ENCODE measurements at regions of chr21 and their contacts with region 1.

Region 1: GRCh38 chr21:38380481-38381137 is 117.7 kb downstream of the ERG start:
- DNase-seq: peak in 1 of 2 donors; percentile 56
- ATAC-seq: no peak
- H3K4me3 ChIP-seq: no peak overlapping the region
- H3K27ac ChIP-seq: peak overlapping the region; percentile 85 to 94
- H3K4me1 ChIP-seq: peaks cover 0 to 3% of the 10 kb centered on the region in 2 donors
- H3K27me3 ChIP-seq: no peaks in the 10 kb centered on the region

Region 2: GRCh38 chr21:38333301-38334272 is 47.0 kb before region 1 on chr21:
- intact Hi-C with region 1: no loop called
- DNase-seq: no peak
- ATAC-seq: peak; percentile 52
- H3K4me3 ChIP-seq: no peak overlapping the region
- H3K27ac ChIP-seq: no peak overlapping the region
- H3K4me1 ChIP-seq: no peaks in the 10 kb centered on the region
- H3K27me3 ChIP-seq: no peaks in the 10 kb centered on the region

Region 3: DNA sequence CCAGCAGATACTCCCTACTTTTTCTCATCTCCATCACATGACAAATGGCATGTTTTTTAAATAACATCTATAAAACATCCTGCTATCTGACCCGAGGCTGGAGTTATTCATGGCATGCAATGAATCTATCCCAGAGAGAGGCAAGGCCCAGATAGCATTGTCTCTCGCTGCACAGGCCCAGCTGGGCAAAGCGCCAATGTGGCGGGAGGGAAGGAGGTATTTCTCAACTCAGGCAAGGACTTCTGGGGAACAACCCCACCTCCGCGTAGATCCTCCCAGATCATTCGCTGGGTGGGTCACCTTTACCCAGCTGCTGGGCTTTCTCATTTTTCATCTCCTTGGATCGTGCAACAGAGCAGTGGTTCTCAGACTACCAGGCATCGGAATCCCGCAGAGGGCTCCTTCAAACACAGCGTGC is 57.9 kb after region 1 on chr21:
- intact Hi-C with region 1: loop called in 1 of 2 experiments (anchors 5 kb)
- DNase-seq: peak; percentile 82 to 90
- ATAC-seq: no peak
- H3K4me3 ChIP-seq: no peak overlapping the region
- H3K27ac ChIP-seq: no peak overlapping the region
- H3K4me1 ChIP-seq: peaks cover 2% of the 10 kb centered on the region in 2 donors
- H3K27me3 ChIP-seq: no peaks in the 10 kb centered on the region

Measured in aorta (tissue), 5 donors.